Sigmoid colon (tissue), 7 donors: ENCODE measurements at regions of chr20 and their contacts with region 1.

Region 1: GRCh38 chr20:36541227-36541763 is at the start of gene MYL9:
- DNase-seq: peak; percentile 99
- H3K4me3 ChIP-seq: peak within 1 kb of the TSS; percentile 83 to 99 (median 94)
- H3K27ac ChIP-seq: peak within 1 kb of the TSS; percentile 98 to 100 (median 99)
- H3K4me1 ChIP-seq: peaks cover 0 to 77% (median 71%) of the 10 kb centered on the region in 4 donors
- H3K27me3 ChIP-seq: no peaks in the 10 kb centered on the region
- CTCF ChIP-seq: no peak
- EP300 ChIP-seq: no peak
- POLR2A ChIP-seq: peak; percentile 57 to 90
- total RNA-seq, gene MYL9: 1,167 to 2,082 (median 1,738) TPM

Region 2: GRCh38 chr20:36460648-36461599 is 80.4 kb before region 1 on chr20:
- intact Hi-C with region 1: loop called (anchors 2 kb)
- DNase-seq: peak; percentile 96
- H3K4me3 ChIP-seq: peak overlapping the region; percentile 65 to 88 (median 81)
- H3K27ac ChIP-seq: peak overlapping the region; percentile 93 to 99 (median 98)
- H3K4me1 ChIP-seq: peaks cover 0 to 43% (median 38%) of the 10 kb centered on the region in 4 donors
- H3K27me3 ChIP-seq: no peaks in the 10 kb centered on the region
- CTCF ChIP-seq: no peak
- EP300 ChIP-seq: peak in 1 of 4 donors; percentile 23
- POLR2A ChIP-seq: peak; percentile 23 to 28

Region 3: GRCh38 chr20:36527331-36528125 is 13.8 kb before region 1 on chr20:
- intact Hi-C with region 1: loop called (anchors 2 kb)
- DNase-seq: peak; percentile 89
- H3K4me3 ChIP-seq: peak overlapping the region in 1 of 4 donors; percentile 13
- H3K27ac ChIP-seq: peak overlapping the region; percentile 76 to 86 (median 83)
- H3K4me1 ChIP-seq: peaks cover 0 to 48% (median 43%) of the 10 kb centered on the region in 4 donors
- H3K27me3 ChIP-seq: no peaks in the 10 kb centered on the region
- CTCF ChIP-seq: no peak
- EP300 ChIP-seq: no peak
- POLR2A ChIP-seq: no peak